ENCODE measurements at regions of chr12 and their contacts with region 1.

Region 1: DNA sequence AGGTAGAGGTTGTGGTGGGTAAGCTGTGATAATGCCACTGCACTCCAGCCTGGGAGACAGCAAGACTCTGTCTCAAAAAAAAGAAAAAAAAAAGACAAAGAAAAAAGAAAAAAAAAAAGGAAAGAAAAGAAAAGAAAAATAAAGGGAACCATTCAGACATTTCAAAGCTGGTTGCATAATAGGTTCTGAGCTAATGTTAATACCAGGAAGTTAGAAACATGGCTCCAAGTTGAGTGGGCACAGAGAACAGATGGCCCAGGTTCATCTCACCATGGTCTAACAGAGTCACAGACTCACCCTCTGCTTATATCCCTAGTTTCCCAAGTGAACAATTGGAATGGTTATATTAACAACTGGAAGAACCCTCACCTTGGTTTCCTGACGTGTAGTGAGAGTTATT is 17.4 kb upstream of the ZDHHC17 start:
- DNase-seq: no peak
- ATAC-seq: no peak
- H3K4me3 Mint-ChIP-seq: no peak overlapping the region
- H3K27ac Mint-ChIP-seq: no peak overlapping the region
- H3K4me1 Mint-ChIP-seq: no peaks in the 10 kb centered on the region
- H3K27me3 Mint-ChIP-seq: peaks cover 3% of the 10 kb centered on the region

Region 2: GRCh38 chr12:76714861-76715260 is 31.7 kb before region 1 on chr12:
- CTCF ChIA-PET with region 1: no interaction called
- POLR2A ChIA-PET with region 1: no interaction called
- intact Hi-C with region 1: loop called in 1 of 2 experiments (anchors 1 kb)
- DNase-seq: no peak
- ATAC-seq: no peak
- H3K4me3 Mint-ChIP-seq: no peak overlapping the region
- H3K27ac Mint-ChIP-seq: no peak overlapping the region
- H3K4me1 Mint-ChIP-seq: no peaks in the 10 kb centered on the region
- H3K27me3 Mint-ChIP-seq: peaks cover 2% of the 10 kb centered on the region

Measured in activated CD4-positive, alpha-beta T cell treated with anti-CD3 and anti-CD28 coated beads for 36 hours (primary cell).